ENCODE measurements at regions of chr14 and their contacts with region 1.

Region 1: GRCh38 chr14:50321009-50321660 is 9.0 kb downstream of the DMAC2L start:
- DNase-seq: peak; percentile 77
- H3K4me3 ChIP-seq: no peak overlapping the region
- H3K27ac ChIP-seq: peak overlapping the region; percentile 48
- H3K4me1 ChIP-seq: no peaks in the 10 kb centered on the region
- H3K27me3 ChIP-seq: no peaks in the 10 kb centered on the region
- CTCF ChIP-seq: peak; percentile 77

Region 2: GRCh38 chr14:50532502-50533240 is 211.5 kb after region 1 on chr14 and contains the start of gene MAP4K5:
- intact Hi-C with region 1: loop called (anchors 2 kb)
- DNase-seq: peak; percentile 92
- H3K4me3 ChIP-seq: peak within 1 kb of the TSS; percentile 95
- H3K27ac ChIP-seq: peak within 1 kb of the TSS; percentile 99
- H3K4me1 ChIP-seq: no peaks in the 10 kb centered on the region
- H3K27me3 ChIP-seq: no peaks in the 10 kb centered on the region
- CTCF ChIP-seq: peak; percentile 73
- total RNA-seq, gene MAP4K5: 39.0 to 43.3 TPM

Measured in colonic mucosa (tissue), 4 donors.